ENCODE measurements at regions of chr12 and their contacts with region 1.

Region 1: GRCh38 chr12:4763549-4763948 is 43.3 kb downstream of the GALNT8 start:
- DNase-seq: peak; percentile 32
- ATAC-seq: peak; percentile 95
- H3K4me3 ChIP-seq: 0 out of 6 replicates have a peak overlapping the region, but pooled peaks of 1 of the 3 experiments have one; percentile 3
- H3K27ac ChIP-seq: no peak overlapping the region
- H3K4me1 ChIP-seq: peaks cover 13% of the 10 kb centered on the region
- H3K27me3 ChIP-seq: peaks cover 0 to 4% of the 10 kb centered on the region in 2 experiments; a peak in 1 of 5 replicates
- CTCF ChIP-seq: peak; percentile 63
- EP300 ChIP-seq: no peak
- POLR2A ChIP-seq: no peak
- RAD21 ChIP-seq: no peak

Region 2: DNA sequence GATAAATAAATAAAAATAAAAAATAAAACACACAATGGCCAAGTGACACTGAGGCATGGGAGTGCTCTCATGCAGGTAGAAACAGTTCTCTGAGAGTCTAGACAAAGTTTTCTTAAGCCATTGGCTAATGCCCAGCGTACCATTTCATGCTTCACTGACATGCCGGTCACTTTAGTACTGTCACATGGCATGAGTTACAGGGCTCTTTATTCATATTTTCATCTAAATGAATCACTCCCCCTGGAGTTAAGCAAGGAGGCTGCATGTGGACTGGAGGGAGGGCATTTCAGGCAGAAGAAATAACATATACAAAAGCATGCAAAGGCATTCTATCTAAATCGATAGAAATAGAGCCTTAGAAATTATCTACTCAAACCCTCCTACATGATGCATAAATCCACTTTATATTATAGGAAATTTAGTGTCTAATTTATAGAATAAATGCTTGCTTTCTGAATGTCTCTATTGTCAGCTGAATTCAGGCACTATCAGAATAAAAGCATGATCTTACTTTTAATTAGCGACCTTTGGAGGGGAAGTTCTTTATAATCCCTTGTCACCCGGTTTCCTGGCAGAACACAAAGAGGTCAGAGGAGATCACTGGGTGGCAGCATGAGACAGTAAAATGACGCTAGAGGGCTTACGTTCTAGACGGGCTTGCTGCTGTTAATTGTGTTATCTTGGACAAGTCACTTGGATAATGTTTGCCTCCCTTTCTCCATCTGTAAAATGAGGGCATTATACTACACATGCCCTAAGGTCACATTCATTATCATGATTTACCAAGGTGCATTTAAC is 184.0 kb before region 1 on chr12:
- CTCF ChIA-PET with region 1: interaction called, 14 read pairs
- POLR2A ChIA-PET with region 1: no interaction called
- in situ Hi-C with region 1: loop called (anchors 5 kb)
- intact Hi-C with region 1: loop called (anchors 1 kb)
- DNase-seq: peak; percentile 17
- ATAC-seq: peak; percentile 80
- H3K4me3 ChIP-seq: no peak overlapping the region
- H3K27ac ChIP-seq: no peak overlapping the region
- H3K4me1 ChIP-seq: no peaks in the 10 kb centered on the region
- H3K27me3 ChIP-seq: peaks cover 3 to 22% of the 10 kb centered on the region in 2 experiments; a peak in 4 of 5 replicates
- CTCF ChIP-seq: peak; percentile 66
- EP300 ChIP-seq: no peak
- POLR2A ChIP-seq: no peak
- RAD21 ChIP-seq: peak; percentile 24; the same call in 1 of the 2 replicates

Region 3: DNA sequence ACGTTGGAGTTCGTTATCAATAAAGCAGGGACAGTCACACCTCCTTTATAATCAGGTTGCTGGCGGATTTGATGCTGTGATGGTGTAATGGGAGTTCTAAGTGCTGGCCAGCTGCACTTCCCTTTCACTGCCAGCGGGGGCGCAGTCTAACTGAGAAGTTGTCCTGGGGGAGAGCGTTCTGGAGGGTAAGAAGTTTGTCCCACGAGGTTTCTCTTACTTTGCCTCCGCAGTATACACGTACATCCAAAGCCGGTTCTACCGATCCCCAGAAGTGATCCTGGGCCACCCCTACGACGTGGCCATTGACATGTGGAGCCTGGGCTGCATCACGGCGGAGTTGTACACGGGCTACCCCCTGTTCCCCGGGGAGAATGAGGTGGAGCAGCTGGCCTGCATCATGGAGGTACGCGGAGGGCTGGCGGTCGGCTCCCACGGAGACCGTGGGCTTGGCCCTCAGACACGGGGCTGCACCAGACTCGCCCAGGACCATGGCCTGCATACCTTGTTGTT is 158.8 kb before region 1 on chr12:
- CTCF ChIA-PET with region 1: interaction called, 4 read pairs
- POLR2A ChIA-PET with region 1: no interaction called
- in situ Hi-C with region 1: no loop called
- intact Hi-C with region 1: loop called (anchors 10 kb)
- DNase-seq: peak; percentile 78
- ATAC-seq: peak; percentile 97
- H3K4me3 ChIP-seq: peak overlapping the region; percentile 77 to 98 (median 91)
- H3K27ac ChIP-seq: no peak overlapping the region
- H3K4me1 ChIP-seq: peaks cover 14% of the 10 kb centered on the region
- H3K27me3 ChIP-seq: 0 out of 5 replicates have a peak, but pooled peaks cover 0 to 4% of the 10 kb centered on the region in 2 experiments
- CTCF ChIP-seq: peak; percentile 93
- EP300 ChIP-seq: no peak
- POLR2A ChIP-seq: peak; percentile 44 to 67; a peak in 3 of 4 replicates
- RAD21 ChIP-seq: no peak